ENCODE measurements at regions of chr12 and their contacts with region 1.

Region 1: GRCh38 chr12:51341259-51342007 is 5.0 kb downstream of the CELA1 start:
- DNase-seq: peak; percentile 75
- ATAC-seq: peak; percentile 76
- H3K4me3 Mint-ChIP-seq: peak overlapping the region; percentile 51
- H3K27ac Mint-ChIP-seq: no peak overlapping the region
- H3K4me1 Mint-ChIP-seq: peaks cover 6% of the 10 kb centered on the region
- H3K27me3 Mint-ChIP-seq: no peaks in the 10 kb centered on the region
- CTCF ChIP-seq: peak; percentile 91

Region 2: DNA sequence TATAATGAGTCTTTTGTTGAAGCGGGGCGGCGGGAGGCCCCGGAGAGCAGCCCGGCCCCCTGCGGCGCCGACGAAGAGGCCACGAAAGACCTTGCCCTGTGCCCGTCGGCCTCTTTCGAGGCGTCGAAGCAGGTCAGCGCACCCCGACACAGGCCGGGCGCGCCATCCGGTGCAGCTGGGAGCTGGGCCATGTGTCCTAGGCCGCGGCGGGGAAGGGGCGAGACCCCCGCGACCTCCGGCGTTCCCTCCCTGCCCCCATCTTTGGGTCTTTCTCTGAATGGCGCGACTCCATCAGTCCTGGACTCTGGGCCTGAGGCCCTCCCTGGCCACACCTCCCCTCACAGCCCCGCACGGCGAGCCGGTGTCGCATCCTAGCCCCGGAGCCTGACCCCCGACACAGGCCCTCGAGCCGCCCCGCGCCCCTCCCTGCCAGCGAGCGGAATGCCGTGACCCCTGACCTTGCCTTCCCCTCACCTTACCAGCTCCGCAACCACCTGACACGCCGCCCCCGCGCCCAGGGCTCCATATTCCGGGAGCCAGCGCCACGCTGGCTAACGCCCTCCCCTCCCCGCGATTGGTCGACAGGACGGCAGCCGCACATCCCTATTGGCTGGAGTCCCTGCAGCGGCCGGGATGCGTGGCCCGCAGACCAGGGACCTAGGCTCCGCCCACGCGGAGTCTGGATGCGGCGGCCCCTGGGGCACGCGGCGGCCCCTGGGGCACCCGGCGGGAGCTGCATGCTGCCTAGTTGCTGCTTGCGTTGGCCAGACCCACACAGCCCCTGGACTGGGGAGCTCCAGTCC is 315.4 kb before region 1 on chr12 and contains the start of gene SLC11A2:
- CTCF ChIA-PET with region 1: interaction called, 13 read pairs
- POLR2A ChIA-PET with region 1: no interaction called
- DNase-seq: peak; percentile 97
- ATAC-seq: peak; percentile 94
- H3K4me3 Mint-ChIP-seq: peak within 1 kb of the TSS; percentile 87
- H3K27ac Mint-ChIP-seq: peak within 1 kb of the TSS; percentile 93
- H3K4me1 Mint-ChIP-seq: peaks cover 47% of the 10 kb centered on the region
- H3K27me3 Mint-ChIP-seq: no peaks in the 10 kb centered on the region
- CTCF ChIP-seq: no peak
- total RNA-seq, gene SLC11A2: 48.6 to 58.0 TPM (median 54.6 TPM) in 3 replicates

Region 3: GRCh38 chr12:51253276-51253675 is 88.2 kb before region 1 on chr12:
- CTCF ChIA-PET with region 1: interaction called, 14 read pairs
- POLR2A ChIA-PET with region 1: no interaction called
- DNase-seq: no peak
- ATAC-seq: no peak
- H3K4me3 Mint-ChIP-seq: no peak overlapping the region
- H3K27ac Mint-ChIP-seq: no peak overlapping the region
- H3K4me1 Mint-ChIP-seq: peaks cover 18% of the 10 kb centered on the region
- H3K27me3 Mint-ChIP-seq: no peaks in the 10 kb centered on the region
- CTCF ChIP-seq: no peak

Region 4: GRCh38 chr12:51270067-51270970 is 71.1 kb before region 1 on chr12 and contains the start of gene SMAGP:
- CTCF ChIA-PET with region 1: interaction called, 133 read pairs
- POLR2A ChIA-PET with region 1: interaction called, 4 read pairs
- DNase-seq: peak; percentile 84
- ATAC-seq: peak; percentile 66
- H3K4me3 Mint-ChIP-seq: peak within 1 kb of the TSS; percentile 94
- H3K27ac Mint-ChIP-seq: peak within 1 kb of the TSS; percentile 74
- H3K4me1 Mint-ChIP-seq: peaks cover 23% of the 10 kb centered on the region
- H3K27me3 Mint-ChIP-seq: peaks cover 17% of the 10 kb centered on the region
- CTCF ChIP-seq: no peak
- total RNA-seq, gene SMAGP: 11.6 to 12.5 TPM (median 11.7 TPM) in 3 replicates

Region 5: GRCh38 chr12:51326762-51327439 is 14.5 kb before region 1 on chr12:
- CTCF ChIA-PET with region 1: interaction called, 14 read pairs
- POLR2A ChIA-PET with region 1: interaction called, 3 read pairs
- DNase-seq: no peak
- ATAC-seq: no peak
- H3K4me3 Mint-ChIP-seq: no peak overlapping the region
- H3K27ac Mint-ChIP-seq: no peak overlapping the region
- H3K4me1 Mint-ChIP-seq: peaks cover 4% of the 10 kb centered on the region
- H3K27me3 Mint-ChIP-seq: no peaks in the 10 kb centered on the region
- CTCF ChIP-seq: no peak